ENCODE measurements at regions of chr20 and their contacts with region 1.

Region 1: DNA sequence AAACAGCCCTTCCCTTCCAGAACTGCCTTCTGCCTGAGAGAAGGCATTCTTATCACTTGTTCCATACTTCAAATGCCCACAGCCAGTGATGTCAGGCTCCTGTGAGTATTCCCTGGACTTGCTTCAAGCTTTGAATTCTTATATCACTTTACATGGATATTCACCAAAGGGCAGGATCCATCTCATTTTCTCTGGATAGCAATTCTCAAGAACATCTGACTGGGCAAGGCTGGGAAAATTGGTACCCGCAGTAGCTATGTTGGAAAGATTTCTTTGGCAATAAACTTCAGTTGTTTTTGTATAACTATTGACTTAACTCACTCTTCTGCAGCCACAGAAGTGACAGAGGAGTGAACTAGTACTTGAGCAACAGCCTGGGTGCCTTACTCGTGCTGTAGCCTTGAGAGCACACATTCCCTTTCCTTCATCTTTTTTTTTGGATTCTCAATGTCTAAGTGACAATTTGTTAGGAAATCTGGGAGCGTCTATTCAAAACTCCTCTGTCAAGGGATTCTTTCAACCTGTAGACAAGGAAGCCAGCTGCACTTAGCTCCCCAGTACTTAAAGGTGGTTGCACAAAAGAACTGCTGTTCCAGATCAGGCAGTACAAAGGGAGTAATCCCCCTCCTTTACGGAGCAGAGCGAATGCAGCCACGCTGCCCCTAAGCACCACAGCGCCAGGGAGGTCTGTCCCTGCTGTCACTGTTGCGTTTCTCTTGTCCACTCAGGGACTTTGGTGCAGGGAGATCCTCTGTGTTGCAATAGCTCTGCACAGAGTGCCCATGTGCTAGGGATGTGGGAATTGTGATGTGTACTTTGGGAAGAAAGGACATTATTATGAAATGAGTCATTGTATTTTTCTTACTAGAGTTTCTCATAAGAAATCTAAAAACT is 69.6 kb downstream of the JAG1 start:
- DNase-seq: no peak
- H3K4me3 Mint-ChIP-seq: no peak overlapping the region
- H3K27ac Mint-ChIP-seq: peak overlapping the region; percentile 59
- H3K4me1 Mint-ChIP-seq: peaks cover 33% of the 10 kb centered on the region
- H3K27me3 Mint-ChIP-seq: no peaks in the 10 kb centered on the region

Region 2: GRCh38 chr20:10350188-10350842 is 253.9 kb before region 1 on chr20:
- intact Hi-C with region 1: loop called (anchors 2 kb)
- DNase-seq: no peak
- H3K4me3 Mint-ChIP-seq: peak overlapping the region; percentile 11
- H3K27ac Mint-ChIP-seq: peak overlapping the region; percentile 84
- H3K4me1 Mint-ChIP-seq: peaks cover 27% of the 10 kb centered on the region
- H3K27me3 Mint-ChIP-seq: no peaks in the 10 kb centered on the region

Region 3: GRCh38 chr20:10511509-10512251 is 92.5 kb before region 1 on chr20:
- intact Hi-C with region 1: loop called (anchors 2 kb)
- DNase-seq: peak; percentile 67
- H3K4me3 Mint-ChIP-seq: peak overlapping the region; percentile 9
- H3K27ac Mint-ChIP-seq: peak overlapping the region; percentile 75
- H3K4me1 Mint-ChIP-seq: peaks cover 57% of the 10 kb centered on the region
- H3K27me3 Mint-ChIP-seq: no peaks in the 10 kb centered on the region

Region 4: GRCh38 chr20:10558635-10559187 is 45.5 kb before region 1 on chr20:
- intact Hi-C with region 1: loop called (anchors 1 kb)
- DNase-seq: peak; percentile 50
- H3K4me3 Mint-ChIP-seq: peak overlapping the region; percentile 17
- H3K27ac Mint-ChIP-seq: no peak overlapping the region
- H3K4me1 Mint-ChIP-seq: peaks cover 38% of the 10 kb centered on the region
- H3K27me3 Mint-ChIP-seq: peaks cover 7% of the 10 kb centered on the region

Region 5: GRCh38 chr20:10654630-10655029 is 50.4 kb after region 1 on chr20:
- intact Hi-C with region 1: loop called (anchors 5 kb)
- DNase-seq: no peak
- H3K4me3 Mint-ChIP-seq: no peak overlapping the region
- H3K27ac Mint-ChIP-seq: no peak overlapping the region
- H3K4me1 Mint-ChIP-seq: peaks cover 10% of the 10 kb centered on the region
- H3K27me3 Mint-ChIP-seq: peaks cover 40% of the 10 kb centered on the region

Region 6: GRCh38 chr20:10769700-10770099 is 165.5 kb after region 1 on chr20:
- intact Hi-C with region 1: no loop called
- DNase-seq: no peak
- H3K4me3 Mint-ChIP-seq: no peak overlapping the region
- H3K27ac Mint-ChIP-seq: no peak overlapping the region
- H3K4me1 Mint-ChIP-seq: no peaks in the 10 kb centered on the region
- H3K27me3 Mint-ChIP-seq: no peaks in the 10 kb centered on the region